PC-3 (cell line): ENCODE measurements at regions of chr18 and their contacts with region 1.

Region 1: GRCh38 chr18:25351777-25352628 is at the start of gene ZNF521:
- DNase-seq: peak; percentile 51
- ATAC-seq: peak; percentile 82
- H3K4me3 ChIP-seq: peak within 1 kb of the TSS; percentile 83
- H3K27ac ChIP-seq: no peak within 1 kb of the TSS
- H3K4me1 ChIP-seq: peaks cover 8% of the 10 kb centered on the region; the same call in 1 of the 2 replicates
- H3K27me3 ChIP-seq: peaks cover 87% of the 10 kb centered on the region
- CTCF ChIP-seq: peak; percentile 27; the same call in 1 of the 2 replicates
- total RNA-seq, gene ZNF521: 0.04 TPM in 1 of 2 replicates, not detected in the other

Region 2: DNA sequence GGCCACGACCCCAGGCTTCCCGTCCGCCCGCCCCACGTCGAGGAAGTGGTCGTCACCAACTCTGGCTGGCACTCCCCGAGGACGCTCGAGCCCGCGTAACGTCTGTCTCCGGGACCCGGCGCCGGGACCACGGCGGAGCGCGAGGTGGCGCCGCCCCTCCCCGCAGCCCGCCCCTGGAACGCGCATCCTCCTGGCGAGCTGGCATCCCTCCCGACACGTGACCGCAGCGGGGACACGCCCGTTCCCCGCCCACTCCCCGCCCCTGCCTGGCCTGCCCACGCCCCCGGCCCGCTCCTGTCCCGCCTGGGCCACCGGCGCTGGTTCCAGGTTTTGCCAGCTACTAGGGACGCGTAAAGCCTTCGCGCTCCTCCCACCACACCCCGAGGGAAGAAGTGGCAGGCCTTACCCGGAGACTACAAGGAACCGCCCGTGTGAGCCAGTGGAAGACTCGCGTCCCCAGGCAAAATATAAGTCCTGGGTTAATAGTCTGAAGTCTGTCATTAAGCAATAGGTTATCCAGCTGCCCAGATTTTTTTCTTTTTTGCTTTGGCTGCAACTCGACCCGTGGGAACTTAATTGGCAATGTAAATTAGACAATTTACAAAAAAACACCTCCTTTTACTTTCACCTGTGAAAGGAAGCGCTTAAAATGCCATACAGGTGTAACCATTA is 954.2 kb before region 1 on chr18 and contains the start of gene OSBPL1A:
- CTCF ChIA-PET with region 1: no interaction called
- POLR2A ChIA-PET with region 1: no interaction called
- intact Hi-C with region 1: loop called (anchors 5 kb)
- DNase-seq: peak; percentile 93
- ATAC-seq: peak; percentile 88
- H3K4me3 ChIP-seq: peak within 1 kb of the TSS; percentile 80
- H3K27ac ChIP-seq: peak within 1 kb of the TSS; percentile 24
- H3K4me1 ChIP-seq: peaks cover 24% of the 10 kb centered on the region
- H3K27me3 ChIP-seq: no peaks in the 10 kb centered on the region
- CTCF ChIP-seq: no peak
- total RNA-seq, gene OSBPL1A: 31.1 and 39.7 TPM in 2 replicates

Region 3: DNA sequence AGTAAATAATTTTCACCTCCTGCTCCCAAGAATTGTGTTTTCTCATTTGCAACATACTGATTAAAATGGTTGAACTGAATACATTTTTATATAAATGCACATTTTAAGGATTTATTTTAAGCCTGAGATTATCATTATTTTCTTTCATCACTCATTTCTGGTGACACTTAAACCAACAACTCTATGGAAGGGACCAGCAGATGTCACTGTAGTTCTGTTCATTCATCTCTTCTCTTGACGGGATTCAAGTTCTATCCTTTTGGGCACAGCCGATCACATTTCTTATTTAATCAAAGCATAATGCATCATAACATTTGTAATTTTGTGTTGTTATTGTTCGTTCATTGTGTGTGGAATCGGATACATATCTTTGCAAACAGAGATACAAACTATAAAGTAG is 473.7 kb before region 1 on chr18:
- CTCF ChIA-PET with region 1: no interaction called
- POLR2A ChIA-PET with region 1: no interaction called
- intact Hi-C with region 1: loop called (anchors 1 kb)
- DNase-seq: peak; percentile 61
- ATAC-seq: peak; percentile 64
- H3K4me3 ChIP-seq: no peak overlapping the region
- H3K27ac ChIP-seq: no peak overlapping the region
- H3K4me1 ChIP-seq: peaks cover 14% of the 10 kb centered on the region; the same call in 1 of the 2 replicates
- H3K27me3 ChIP-seq: peaks cover 6% of the 10 kb centered on the region; the same call in 1 of the 2 replicates
- CTCF ChIP-seq: peak; percentile 66

Region 4: DNA sequence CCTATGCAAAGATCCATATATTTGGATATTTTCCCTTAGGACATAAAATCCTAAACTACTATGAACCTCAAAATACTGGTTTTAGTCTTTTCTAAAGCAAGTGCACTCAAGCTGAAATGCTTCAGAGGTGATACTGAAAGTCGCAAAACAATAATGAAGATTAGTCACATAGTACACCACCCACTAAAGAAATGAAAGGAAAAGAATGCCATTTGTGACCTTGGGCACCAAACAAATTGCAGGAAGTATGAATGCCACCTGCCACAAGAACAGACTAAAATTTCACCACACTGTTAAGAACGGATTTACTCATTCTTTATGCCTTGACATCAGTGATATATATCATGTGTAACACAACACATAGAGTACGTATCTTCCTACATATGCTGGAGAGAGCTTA is 161.5 kb before region 1 on chr18:
- CTCF ChIA-PET with region 1: no interaction called
- POLR2A ChIA-PET with region 1: no interaction called
- intact Hi-C with region 1: loop called (anchors 10 kb)
- DNase-seq: no peak
- ATAC-seq: no peak
- H3K4me3 ChIP-seq: no peak overlapping the region
- H3K27ac ChIP-seq: no peak overlapping the region
- H3K4me1 ChIP-seq: no peaks in the 10 kb centered on the region
- H3K27me3 ChIP-seq: peaks cover 83% of the 10 kb centered on the region
- CTCF ChIP-seq: no peak

Region 5: GRCh38 chr18:25247725-25248124 is 104.3 kb before region 1 on chr18:
- CTCF ChIA-PET with region 1: interaction called, 3 read pairs
- POLR2A ChIA-PET with region 1: interaction called, 4 read pairs
- intact Hi-C with region 1: loop called (anchors 5 kb)
- DNase-seq: peak; percentile 87
- ATAC-seq: peak; percentile 64
- H3K4me3 ChIP-seq: peak overlapping the region; percentile 44; the same call in 1 of the 2 replicates
- H3K27ac ChIP-seq: peak overlapping the region; percentile 91
- H3K4me1 ChIP-seq: peaks cover 37% of the 10 kb centered on the region
- H3K27me3 ChIP-seq: no peaks in the 10 kb centered on the region
- CTCF ChIP-seq: no peak

Region 6: GRCh38 chr18:25289001-25289631 is 62.9 kb before region 1 on chr18:
- CTCF ChIA-PET with region 1: no interaction called
- POLR2A ChIA-PET with region 1: interaction called, 3 read pairs
- intact Hi-C with region 1: loop called (anchors 5 kb)
- DNase-seq: peak; percentile 84
- ATAC-seq: peak; percentile 88
- H3K4me3 ChIP-seq: peak overlapping the region; percentile 49
- H3K27ac ChIP-seq: peak overlapping the region; percentile 95
- H3K4me1 ChIP-seq: peaks cover 18% of the 10 kb centered on the region
- H3K27me3 ChIP-seq: no peaks in the 10 kb centered on the region
- CTCF ChIP-seq: no peak

Region 7: GRCh38 chr18:25310045-25310444 is 42.0 kb before region 1 on chr18:
- CTCF ChIA-PET with region 1: interaction called, 19 read pairs
- POLR2A ChIA-PET with region 1: no interaction called
- intact Hi-C with region 1: no loop called
- DNase-seq: peak; percentile 55
- ATAC-seq: peak; percentile 29; the same call in 1 of the 2 replicates
- H3K4me3 ChIP-seq: no peak overlapping the region
- H3K27ac ChIP-seq: no peak overlapping the region
- H3K4me1 ChIP-seq: no peaks in the 10 kb centered on the region
- H3K27me3 ChIP-seq: peaks cover 20% of the 10 kb centered on the region
- CTCF ChIP-seq: peak; percentile 53; the same call in 1 of the 2 replicates

Region 8: GRCh38 chr18:25435149-25435782 is 83.3 kb after region 1 on chr18:
- CTCF ChIA-PET with region 1: no interaction called
- POLR2A ChIA-PET with region 1: no interaction called
- intact Hi-C with region 1: no loop called
- DNase-seq: no peak
- ATAC-seq: no peak
- H3K4me3 ChIP-seq: no peak overlapping the region
- H3K27ac ChIP-seq: no peak overlapping the region
- H3K4me1 ChIP-seq: no peaks in the 10 kb centered on the region
- H3K27me3 ChIP-seq: peaks cover 51% of the 10 kb centered on the region
- CTCF ChIP-seq: no peak

Region 9: GRCh38 chr18:25495606-25496005 is 143.6 kb after region 1 on chr18:
- CTCF ChIA-PET with region 1: no interaction called
- POLR2A ChIA-PET with region 1: no interaction called
- intact Hi-C with region 1: no loop called
- DNase-seq: no peak
- ATAC-seq: no peak
- H3K4me3 ChIP-seq: no peak overlapping the region
- H3K27ac ChIP-seq: no peak overlapping the region
- H3K4me1 ChIP-seq: no peaks in the 10 kb centered on the region
- H3K27me3 ChIP-seq: peaks cover 12% of the 10 kb centered on the region
- CTCF ChIP-seq: no peak